HAP-1 (cell line): ENCODE measurements at regions of chr9 and their contacts with region 1.

Region 1: DNA sequence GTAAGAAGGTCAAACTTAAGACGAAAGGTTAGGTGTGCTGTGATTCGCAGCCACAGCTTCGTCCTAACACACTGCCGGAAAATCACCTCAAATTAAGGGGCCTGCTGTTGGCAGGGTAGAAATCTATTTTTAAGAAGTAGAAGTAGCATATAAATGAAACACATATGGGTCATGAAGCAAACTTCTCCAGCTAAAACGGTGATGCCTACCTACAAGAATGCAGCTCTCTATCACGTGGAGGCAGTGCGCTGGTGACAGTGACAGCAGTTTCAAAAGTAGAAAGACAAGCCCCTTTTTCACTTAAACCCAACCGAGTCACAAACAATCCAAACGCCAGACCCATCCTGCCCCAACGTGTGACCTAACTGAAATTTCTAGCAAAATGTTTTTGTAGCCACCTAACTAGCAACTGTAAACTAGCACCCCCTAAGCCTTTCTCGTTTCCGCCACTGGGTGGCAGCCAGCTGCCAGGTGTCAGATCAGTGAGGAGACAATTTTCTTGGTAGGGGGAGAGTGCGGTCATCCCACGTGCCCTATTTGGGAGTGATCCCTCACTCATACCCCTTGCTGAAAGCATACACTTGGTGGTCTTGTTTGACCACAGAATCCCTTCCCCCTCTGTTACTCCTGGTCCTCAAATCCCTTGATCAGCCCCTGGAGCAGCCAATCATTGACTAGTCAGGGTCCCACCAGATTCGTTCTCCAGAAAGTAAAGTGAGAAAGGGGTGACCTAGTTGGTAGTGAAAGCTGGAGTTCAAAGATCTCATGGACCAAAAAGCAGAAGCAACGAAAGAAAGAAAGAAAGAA is 71.8 kb upstream of the MAMDC2 start:
- DNase-seq: peak; percentile 60 to 84
- H3K4me3 ChIP-seq: no peak overlapping the region
- H3K4me1 ChIP-seq: peaks cover 7% of the 10 kb centered on the region
- H3K27me3 ChIP-seq: no peaks in the 10 kb centered on the region

Region 2: DNA sequence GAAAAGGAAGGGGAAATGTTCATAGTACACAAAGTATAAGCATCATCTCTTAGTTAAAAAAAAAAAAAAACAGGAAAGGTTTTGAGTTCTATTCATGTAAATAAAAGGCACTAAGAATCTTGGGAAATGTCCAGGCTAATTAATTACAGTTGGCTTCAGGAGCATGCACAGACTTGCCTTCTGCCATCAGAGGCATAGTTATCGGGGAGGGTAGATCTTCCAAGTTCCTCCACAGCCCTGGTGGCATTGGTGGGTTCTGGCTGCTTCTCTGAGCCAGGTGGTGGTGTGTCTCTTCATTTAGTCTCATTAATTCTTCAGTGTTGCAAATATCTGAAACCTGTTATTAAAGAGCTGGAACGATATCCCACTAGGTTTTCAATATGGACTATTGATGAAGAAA is 1516.4 kb before region 1 on chr9:
- in situ Hi-C with region 1: no loop called
- DNase-seq: no peak
- H3K4me3 ChIP-seq: no peak overlapping the region
- H3K4me1 ChIP-seq: no peaks in the 10 kb centered on the region
- H3K27me3 ChIP-seq: no peaks in the 10 kb centered on the region

Region 3: GRCh38 chr9:69689991-69690538 is 281.8 kb before region 1 on chr9:
- in situ Hi-C with region 1: no loop called
- DNase-seq: no peak
- H3K4me3 ChIP-seq: no peak overlapping the region
- H3K4me1 ChIP-seq: peaks cover 7% of the 10 kb centered on the region
- H3K27me3 ChIP-seq: no peaks in the 10 kb centered on the region

Region 4: GRCh38 chr9:69805962-69806515 is 165.8 kb before region 1 on chr9:
- in situ Hi-C with region 1: no loop called
- DNase-seq: no peak
- H3K4me3 ChIP-seq: no peak overlapping the region
- H3K4me1 ChIP-seq: 0 out of 2 replicates have a peak, but pooled peaks cover 4% of the 10 kb centered on the region
- H3K27me3 ChIP-seq: no peaks in the 10 kb centered on the region

Region 5: DNA sequence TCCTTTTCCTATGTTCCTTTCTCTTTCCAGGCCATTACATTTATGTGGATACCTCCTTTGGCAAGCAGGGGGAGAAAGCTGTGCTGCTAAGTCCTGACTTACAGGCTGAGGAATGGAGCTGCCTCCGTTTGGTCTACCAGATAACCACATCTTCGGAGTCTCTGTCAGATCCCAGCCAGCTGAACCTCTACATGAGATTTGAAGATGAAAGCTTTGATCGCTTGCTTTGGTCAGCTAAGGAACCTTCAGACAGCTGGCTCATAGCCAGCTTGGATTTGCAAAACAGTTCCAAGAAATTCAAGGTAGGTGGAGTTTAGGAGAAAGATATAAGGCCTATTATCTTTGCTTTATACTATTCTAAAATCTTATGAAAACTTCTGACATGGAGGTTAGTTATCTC is 136.3 kb after region 1 on chr9:
- in situ Hi-C with region 1: loop called (anchors 5 kb)
- DNase-seq: no peak
- H3K4me3 ChIP-seq: no peak overlapping the region
- H3K4me1 ChIP-seq: no peaks in the 10 kb centered on the region
- H3K27me3 ChIP-seq: peaks cover 4% of the 10 kb centered on the region; the same call in 1 of the 2 replicates

Region 6: DNA sequence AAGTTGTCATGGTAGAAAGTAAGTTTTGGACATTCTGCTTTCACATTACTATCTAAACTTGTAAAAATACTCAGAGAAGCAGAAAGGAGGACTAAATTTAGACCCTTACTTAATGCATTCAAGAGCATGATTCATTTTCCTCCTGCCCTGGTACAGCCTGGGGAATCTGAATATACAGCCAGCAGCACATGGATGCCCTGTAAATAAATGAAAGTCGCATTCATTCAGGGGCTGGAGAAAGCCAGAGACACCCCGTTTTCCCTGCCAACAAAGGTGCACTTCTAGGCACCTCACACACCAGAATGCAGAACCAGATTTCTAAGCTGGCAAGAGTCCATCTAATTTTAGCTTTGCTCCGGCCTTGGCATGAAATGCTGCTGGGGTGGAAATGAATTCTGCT is 615.4 kb after region 1 on chr9:
- in situ Hi-C with region 1: loop called (anchors 25 kb)
- DNase-seq: no peak
- H3K4me3 ChIP-seq: no peak overlapping the region
- H3K4me1 ChIP-seq: no peaks in the 10 kb centered on the region
- H3K27me3 ChIP-seq: no peaks in the 10 kb centered on the region